ENCODE measurements at regions of chr19 and their contacts with region 1.

Region 1: GRCh38 chr19:7919610-7920518 is at the start of gene SNAPC2:
- DNase-seq: peak; percentile 95 to 99 (median 98)
- ATAC-seq: peak; percentile 71
- H3K4me3 ChIP-seq: peak within 1 kb of the TSS; percentile 86
- H3K4me3 Mint-ChIP-seq: peak within 1 kb of the TSS; percentile 88 to 97 (median 94)
- H3K27ac ChIP-seq: peak within 1 kb of the TSS; percentile 75
- H3K27ac Mint-ChIP-seq: peak within 1 kb of the TSS; percentile 76 to 97 (median 92)
- H3K4me1 ChIP-seq: peaks cover 25 to 34% of the 10 kb centered on the region in 2 donors
- H3K4me1 Mint-ChIP-seq: peaks cover 15 to 52% (median 38%) of the 10 kb centered on the region in 7 donors
- H3K27me3 ChIP-seq: peaks cover 3 to 20% of the 10 kb centered on the region in 2 donors
- H3K27me3 Mint-ChIP-seq: peaks cover 12 to 33% (median 14%) of the 10 kb centered on the region in 5 donors
- total RNA-seq, gene SNAPC2: 12.3 to 24.4 (median 21.4) TPM

Region 2: DNA sequence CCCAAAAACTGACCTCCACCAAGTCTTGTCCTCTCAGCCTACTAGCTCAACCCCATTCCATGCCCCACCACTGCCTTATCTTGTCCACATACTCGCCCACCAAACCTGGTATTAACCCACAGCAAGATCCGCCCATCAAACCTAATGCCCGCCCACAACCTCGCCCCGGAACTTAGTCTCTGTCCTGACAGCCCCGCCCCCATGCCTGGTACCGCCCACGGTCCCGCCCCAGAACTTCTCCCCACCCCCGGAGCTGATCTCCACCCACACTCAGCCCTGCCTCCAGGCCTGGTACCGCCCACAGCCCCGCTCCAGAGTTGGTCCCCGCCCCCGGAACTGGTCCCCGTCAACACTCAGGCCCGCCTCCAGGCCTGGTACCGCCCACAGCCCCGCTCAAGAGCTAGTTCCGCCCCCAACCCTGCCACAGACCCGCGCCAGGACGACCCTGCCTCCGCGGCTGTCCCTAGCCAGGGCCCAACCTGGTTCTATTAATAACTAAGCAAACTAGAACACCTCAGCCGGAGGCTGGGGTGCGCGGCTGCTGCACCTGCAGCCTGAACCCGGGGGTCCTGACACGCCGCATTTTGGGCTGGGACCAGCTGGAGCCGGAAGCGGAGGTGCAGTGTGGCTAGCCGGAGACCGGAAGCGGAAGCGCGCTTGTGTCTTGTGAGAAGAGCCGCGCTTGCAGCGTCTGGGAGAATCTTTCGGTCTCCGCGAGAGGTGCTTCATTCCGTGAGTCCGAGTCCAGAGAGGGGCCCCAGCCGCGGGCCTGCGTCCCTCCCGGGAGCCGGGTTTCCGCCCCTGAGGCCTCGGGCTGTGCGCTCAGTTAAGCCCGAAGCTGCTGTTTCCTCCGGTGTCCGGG is 850.6 kb before region 1 on chr19 and contains the start of gene ZNF557:
- CTCF ChIA-PET with region 1: no interaction called
- POLR2A ChIA-PET with region 1: no interaction called
- intact Hi-C with region 1: loop called in 1 of 2 experiments (anchors 10 kb)
- DNase-seq: peak; percentile 93 to 100 (median 99)
- ATAC-seq: peak; percentile 99
- H3K4me3 ChIP-seq: peak within 1 kb of the TSS; percentile 100
- H3K4me3 Mint-ChIP-seq: peak within 1 kb of the TSS; percentile 90 to 98 (median 94)
- H3K27ac ChIP-seq: peak within 1 kb of the TSS; percentile 84
- H3K27ac Mint-ChIP-seq: peak within 1 kb of the TSS; percentile 63 to 95 (median 94)
- H3K4me1 ChIP-seq: peaks cover 14% of the 10 kb centered on the region in 2 donors
- H3K4me1 Mint-ChIP-seq: peaks cover 7 to 40% (median 19%) of the 10 kb centered on the region in 7 donors
- H3K27me3 ChIP-seq: no peaks in the 10 kb centered on the region
- H3K27me3 Mint-ChIP-seq: no peaks in the 10 kb centered on the region
- total RNA-seq, gene ZNF557: 11.7 to 36.2 (median 20.0) TPM

Region 3: GRCh38 chr19:7629347-7630054 is 290.4 kb before region 1 on chr19 and contains the starts of genes PET100 and XAB2:
- CTCF ChIA-PET with region 1: no interaction called
- POLR2A ChIA-PET with region 1: interaction called, 3 read pairs
- intact Hi-C with region 1: loop called (anchors 1 to 5 kb)
- DNase-seq: peak; percentile 81 to 97 (median 95)
- ATAC-seq: peak; percentile 97
- H3K4me3 ChIP-seq: peak within 1 kb of the TSS; percentile 89
- H3K4me3 Mint-ChIP-seq: peak within 1 kb of the TSS; percentile 87 to 100 (median 98)
- H3K27ac ChIP-seq: peak within 1 kb of the TSS; percentile 92
- H3K27ac Mint-ChIP-seq: peak within 1 kb of the TSS; percentile 96 to 100 (median 99)
- H3K4me1 ChIP-seq: peaks cover 19 to 21% of the 10 kb centered on the region in 2 donors
- H3K4me1 Mint-ChIP-seq: peaks cover 25 to 57% (median 38%) of the 10 kb centered on the region in 7 donors
- H3K27me3 ChIP-seq: no peaks in the 10 kb centered on the region
- H3K27me3 Mint-ChIP-seq: no peaks in the 10 kb centered on the region
- total RNA-seq, gene PET100: 112 to 134 (median 117) TPM
- total RNA-seq, gene XAB2: 49.3 to 79.8 (median 76.4) TPM

Region 4: DNA sequence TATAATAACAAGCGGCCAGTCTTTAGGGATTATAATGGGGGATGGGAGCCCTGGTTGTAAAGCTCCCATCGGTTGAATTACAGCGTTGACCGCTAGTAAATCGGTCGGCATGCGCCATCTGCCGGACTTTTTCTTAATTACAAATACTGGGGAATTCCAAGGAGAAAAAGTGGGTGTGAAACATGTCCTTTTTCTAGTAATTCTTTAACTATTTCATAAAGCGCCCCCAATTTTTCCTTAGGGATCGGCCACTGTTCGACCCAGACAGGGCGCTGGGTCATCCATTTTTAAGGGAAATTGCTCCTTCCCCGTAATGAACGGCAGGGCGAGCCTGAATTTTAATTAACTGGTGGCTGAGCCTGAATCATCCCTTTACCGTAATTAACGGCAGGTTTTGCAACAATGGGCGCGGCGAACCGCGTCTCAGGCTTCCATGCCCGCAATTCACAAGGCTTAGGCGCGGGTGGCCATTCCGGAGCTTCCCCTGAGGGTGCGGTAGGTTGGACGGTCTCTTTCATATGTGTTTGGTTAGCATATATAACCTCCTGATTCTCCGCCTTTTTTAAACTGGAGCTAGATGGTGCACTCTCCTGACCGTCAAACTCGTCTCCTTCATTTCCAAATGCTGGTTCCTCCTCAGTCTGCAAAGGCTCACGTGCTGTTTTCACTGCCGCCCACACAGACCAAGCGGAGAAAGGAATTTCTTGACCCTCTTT is 120.1 kb before region 1 on chr19:
- CTCF ChIA-PET with region 1: no interaction called
- POLR2A ChIA-PET with region 1: no interaction called
- intact Hi-C with region 1: no loop called
- DNase-seq: peak; percentile 13 to 61 (median 39)
- ATAC-seq: peak; percentile 71
- H3K4me3 ChIP-seq: no peak overlapping the region
- H3K4me3 Mint-ChIP-seq: peak overlapping the region in 1 of 10 donors; percentile 23
- H3K27ac ChIP-seq: no peak overlapping the region
- H3K27ac Mint-ChIP-seq: peak overlapping the region in 1 of 9 donors; percentile 63
- H3K4me1 ChIP-seq: no peaks in the 10 kb centered on the region
- H3K4me1 Mint-ChIP-seq: peaks cover 0 to 8% (median 6%) of the 10 kb centered on the region in 7 donors
- H3K27me3 ChIP-seq: no peaks in the 10 kb centered on the region
- H3K27me3 Mint-ChIP-seq: peaks cover 0 to 44% (median 11%) of the 10 kb centered on the region in 5 donors

Region 5: DNA sequence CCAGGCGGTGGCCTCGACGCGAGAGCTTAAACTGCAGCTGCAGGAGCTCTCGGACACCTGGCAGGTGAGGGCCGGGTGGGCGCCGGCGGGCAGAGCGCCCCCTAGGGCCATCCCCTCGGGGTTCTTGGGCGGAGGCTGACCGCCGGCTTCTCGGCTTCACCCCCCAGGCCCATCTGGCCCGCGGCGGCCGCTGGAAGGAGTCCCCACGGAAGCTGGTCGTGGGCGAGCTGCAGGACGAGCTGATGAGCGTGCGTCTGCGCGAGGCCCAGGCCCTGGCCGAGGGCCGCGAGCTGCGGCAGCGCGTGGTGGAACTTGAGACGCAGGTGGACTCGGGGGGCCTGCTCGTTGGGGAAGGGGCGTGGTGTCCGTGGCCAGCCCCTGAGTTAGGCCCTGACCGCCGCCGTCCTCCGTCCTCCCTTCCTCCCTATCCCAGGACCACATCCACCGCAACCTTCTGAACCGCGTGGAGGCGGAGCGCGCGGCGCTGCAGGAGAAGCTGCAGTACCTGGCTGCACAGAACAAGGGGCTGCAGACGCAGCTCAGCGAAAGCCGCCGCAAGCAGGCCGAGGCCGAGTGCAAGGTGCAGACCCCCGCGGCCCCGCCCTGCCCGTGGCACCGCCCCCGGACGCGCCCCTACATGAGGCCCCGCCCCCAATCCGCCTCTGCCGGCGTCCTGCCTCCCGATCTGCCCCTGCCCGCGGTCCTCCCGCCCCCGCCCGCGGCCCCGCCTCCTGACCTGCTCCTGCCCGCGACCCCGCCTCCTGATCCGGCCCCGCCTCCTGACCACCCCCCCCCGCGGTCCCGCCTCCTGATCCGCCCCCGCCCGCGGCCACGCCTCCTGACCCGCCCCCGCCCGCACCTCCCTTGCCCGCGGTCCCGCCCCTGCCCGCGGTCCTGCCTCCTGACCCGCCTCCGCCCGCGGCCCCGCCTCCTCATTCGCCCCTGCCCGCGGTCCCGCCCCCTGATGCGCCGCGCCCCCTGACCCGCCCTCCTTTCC is 57.6 kb before region 1 on chr19:
- CTCF ChIA-PET with region 1: interaction called, 3 read pairs
- POLR2A ChIA-PET with region 1: interaction called, 10 read pairs
- intact Hi-C with region 1: loop called in 1 of 2 experiments (anchors 1 kb)
- DNase-seq: peak; percentile 49 to 78 (median 69)
- ATAC-seq: peak; percentile 84
- H3K4me3 ChIP-seq: peak overlapping the region; percentile 50
- H3K4me3 Mint-ChIP-seq: peak overlapping the region; percentile 23 to 83 (median 64)
- H3K27ac ChIP-seq: no peak overlapping the region
- H3K27ac Mint-ChIP-seq: no peak overlapping the region
- H3K4me1 ChIP-seq: peaks cover 0 to 16% of the 10 kb centered on the region in 2 donors
- H3K4me1 Mint-ChIP-seq: peaks cover 7 to 23% (median 10%) of the 10 kb centered on the region in 7 donors
- H3K27me3 ChIP-seq: no peaks in the 10 kb centered on the region
- H3K27me3 Mint-ChIP-seq: peaks cover 0 to 46% (median 0%) of the 10 kb centered on the region in 5 donors

Region 6: GRCh38 chr19:7868676-7869452 is 51.0 kb before region 1 on chr19:
- CTCF ChIA-PET with region 1: interaction called, 8 read pairs
- POLR2A ChIA-PET with region 1: interaction called, 7 read pairs
- intact Hi-C with region 1: loop called (anchors 1 kb)
- DNase-seq: peak in 8 of 9 donors; percentile 51 to 95 (median 89)
- ATAC-seq: peak; percentile 83
- H3K4me3 ChIP-seq: peak overlapping the region; percentile 74
- H3K4me3 Mint-ChIP-seq: peak overlapping the region; percentile 69 to 87 (median 81)
- H3K27ac ChIP-seq: peak overlapping the region; percentile 69
- H3K27ac Mint-ChIP-seq: peak overlapping the region; percentile 34 to 90 (median 58)
- H3K4me1 ChIP-seq: peaks cover 12 to 19% of the 10 kb centered on the region in 2 donors
- H3K4me1 Mint-ChIP-seq: peaks cover 24 to 39% (median 36%) of the 10 kb centered on the region in 7 donors
- H3K27me3 ChIP-seq: peaks cover 0 to 2% of the 10 kb centered on the region in 2 donors
- H3K27me3 Mint-ChIP-seq: peaks cover 0 to 62% (median 8%) of the 10 kb centered on the region in 5 donors

Region 7: GRCh38 chr19:7903244-7904073 is 16.4 kb before region 1 on chr19 and contains the start of gene MAP2K7:
- CTCF ChIA-PET with region 1: interaction called, 10 read pairs
- POLR2A ChIA-PET with region 1: interaction called, 35 read pairs
- intact Hi-C with region 1: loop called (anchors 1 kb)
- DNase-seq: peak; percentile 99 to 100 (median 100)
- ATAC-seq: peak; percentile 91
- H3K4me3 ChIP-seq: peak within 1 kb of the TSS; percentile 91
- H3K4me3 Mint-ChIP-seq: peak within 1 kb of the TSS; percentile 87 to 95 (median 92)
- H3K27ac ChIP-seq: peak within 1 kb of the TSS; percentile 77
- H3K27ac Mint-ChIP-seq: peak within 1 kb of the TSS; percentile 91 to 98 (median 96)
- H3K4me1 ChIP-seq: peaks cover 20 to 24% of the 10 kb centered on the region in 2 donors
- H3K4me1 Mint-ChIP-seq: peaks cover 12 to 37% (median 30%) of the 10 kb centered on the region in 7 donors
- H3K27me3 ChIP-seq: no peaks in the 10 kb centered on the region
- H3K27me3 Mint-ChIP-seq: peaks cover 0 to 3% (median 0%) of the 10 kb centered on the region in 5 donors
- total RNA-seq, gene MAP2K7: 48.7 to 109 (median 66.5) TPM

Region 8: GRCh38 chr19:8194528-8195267 is 274.8 kb after region 1 on chr19:
- CTCF ChIA-PET with region 1: no interaction called
- POLR2A ChIA-PET with region 1: no interaction called
- intact Hi-C with region 1: no loop called
- DNase-seq: peak in 5 of 9 donors; percentile 20 to 40 (median 34)
- ATAC-seq: peak; percentile 60
- H3K4me3 ChIP-seq: peak overlapping the region; percentile 19
- H3K4me3 Mint-ChIP-seq: peak overlapping the region; percentile 63 to 93 (median 82)
- H3K27ac ChIP-seq: peak overlapping the region; percentile 62
- H3K27ac Mint-ChIP-seq: peak overlapping the region; percentile 87 to 98 (median 93)
- H3K4me1 ChIP-seq: peaks cover 15 to 20% of the 10 kb centered on the region in 2 donors
- H3K4me1 Mint-ChIP-seq: peaks cover 42 to 53% (median 49%) of the 10 kb centered on the region in 7 donors
- H3K27me3 ChIP-seq: no peaks in the 10 kb centered on the region
- H3K27me3 Mint-ChIP-seq: no peaks in the 10 kb centered on the region

Region 9: DNA sequence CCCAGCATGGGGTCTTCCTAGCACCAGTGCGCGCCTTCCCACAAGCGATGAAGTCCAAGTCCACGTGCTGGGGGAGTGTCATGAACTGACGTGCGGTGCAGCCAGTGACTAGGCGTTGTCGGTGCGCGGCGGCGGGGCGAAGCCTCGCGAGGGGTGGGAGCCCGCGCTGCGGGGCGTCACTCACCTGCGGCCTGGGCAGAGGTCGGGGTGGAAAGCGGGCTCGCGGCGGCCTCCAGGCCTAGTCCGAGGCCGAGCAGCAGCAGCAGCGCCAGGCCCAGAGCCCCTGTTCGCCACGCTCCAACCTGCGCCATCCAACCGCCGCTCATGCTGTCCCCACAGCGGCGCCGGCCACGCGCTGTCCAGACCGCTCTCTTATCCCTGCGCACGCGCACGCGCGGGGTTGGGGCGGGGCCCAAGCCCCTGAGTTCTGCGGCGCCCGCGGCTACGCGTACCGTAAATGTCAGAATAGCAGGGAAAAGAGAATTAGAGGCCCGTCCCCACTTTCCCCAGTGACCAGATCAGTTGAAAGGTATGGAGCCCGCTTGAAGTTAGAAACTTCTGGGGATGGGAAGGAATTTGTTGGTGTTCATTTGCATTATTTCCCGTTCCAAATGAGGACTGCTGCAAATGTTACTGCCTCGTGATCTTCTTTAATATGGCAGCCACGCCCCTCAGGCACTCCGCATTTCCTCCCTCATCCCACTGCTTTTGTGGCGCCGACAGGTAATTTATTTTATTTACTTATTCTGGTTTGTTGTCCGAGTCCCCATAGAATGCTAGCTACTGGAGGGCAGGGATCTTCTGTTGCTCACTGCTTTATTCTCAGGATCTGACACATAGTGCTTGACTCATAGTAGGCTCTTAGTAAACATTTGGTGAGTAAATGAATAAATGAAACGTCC is 388.4 kb after region 1 on chr19 and contains the start of gene CD320:
- CTCF ChIA-PET with region 1: no interaction called
- POLR2A ChIA-PET with region 1: no interaction called
- intact Hi-C with region 1: loop called in 1 of 2 experiments (anchors 2 kb)
- DNase-seq: peak; percentile 84 to 90 (median 89)
- ATAC-seq: peak; percentile 95
- H3K4me3 ChIP-seq: peak within 1 kb of the TSS; percentile 83
- H3K4me3 Mint-ChIP-seq: peak within 1 kb of the TSS; percentile 90 to 97 (median 92)
- H3K27ac ChIP-seq: peak within 1 kb of the TSS; percentile 89
- H3K27ac Mint-ChIP-seq: peak within 1 kb of the TSS; percentile 79 to 98 (median 94)
- H3K4me1 ChIP-seq: peaks cover 20 to 22% of the 10 kb centered on the region in 2 donors
- H3K4me1 Mint-ChIP-seq: peaks cover 18 to 38% (median 35%) of the 10 kb centered on the region in 7 donors
- H3K27me3 ChIP-seq: no peaks in the 10 kb centered on the region
- H3K27me3 Mint-ChIP-seq: no peaks in the 10 kb centered on the region
- total RNA-seq, gene CD320: 20.5 to 52.0 (median 27.2) TPM